ENCODE measurements at regions of chr2 and their contacts with region 1.

Region 1: DNA sequence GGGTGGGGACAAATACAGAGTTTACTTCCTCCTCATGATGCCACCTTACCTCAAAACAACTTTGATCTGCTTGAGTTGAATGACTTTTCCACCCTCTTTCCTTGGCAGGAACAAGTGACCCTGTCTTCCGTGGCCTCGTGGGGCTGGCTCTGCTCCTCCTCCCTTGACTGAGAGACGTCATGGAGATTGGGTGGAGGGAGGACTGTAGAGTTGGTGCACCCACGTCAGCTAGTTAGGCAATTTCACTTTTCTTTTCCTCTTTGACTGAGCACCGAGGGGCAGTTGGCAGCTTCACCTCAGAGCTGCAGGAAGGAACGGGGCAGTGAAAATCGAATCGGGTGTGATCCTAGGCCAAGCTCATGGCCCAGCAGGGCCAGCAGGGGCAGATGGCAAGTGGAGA is at the start of gene SP140:
- DNase-seq: peak; percentile 86 to 97 (median 88)
- H3K4me3 ChIP-seq: peak within 1 kb of the TSS; percentile 39 to 68
- H3K4me3 Mint-ChIP-seq: peak within 1 kb of the TSS; percentile 88 to 97 (median 90)
- H3K27ac ChIP-seq: peak within 1 kb of the TSS; percentile 79
- H3K27ac Mint-ChIP-seq: peak within 1 kb of the TSS; percentile 96 to 99 (median 97)
- H3K4me1 ChIP-seq: peaks cover 60% of the 10 kb centered on the region
- H3K4me1 Mint-ChIP-seq: peaks cover 47 to 77% (median 56%) of the 10 kb centered on the region in 4 donors
- H3K27me3 ChIP-seq: no peaks in the 10 kb centered on the region
- H3K27me3 Mint-ChIP-seq: no peaks in the 10 kb centered on the region
- total RNA-seq, gene SP140: 70.8 to 79.3 TPM

Region 2: DNA sequence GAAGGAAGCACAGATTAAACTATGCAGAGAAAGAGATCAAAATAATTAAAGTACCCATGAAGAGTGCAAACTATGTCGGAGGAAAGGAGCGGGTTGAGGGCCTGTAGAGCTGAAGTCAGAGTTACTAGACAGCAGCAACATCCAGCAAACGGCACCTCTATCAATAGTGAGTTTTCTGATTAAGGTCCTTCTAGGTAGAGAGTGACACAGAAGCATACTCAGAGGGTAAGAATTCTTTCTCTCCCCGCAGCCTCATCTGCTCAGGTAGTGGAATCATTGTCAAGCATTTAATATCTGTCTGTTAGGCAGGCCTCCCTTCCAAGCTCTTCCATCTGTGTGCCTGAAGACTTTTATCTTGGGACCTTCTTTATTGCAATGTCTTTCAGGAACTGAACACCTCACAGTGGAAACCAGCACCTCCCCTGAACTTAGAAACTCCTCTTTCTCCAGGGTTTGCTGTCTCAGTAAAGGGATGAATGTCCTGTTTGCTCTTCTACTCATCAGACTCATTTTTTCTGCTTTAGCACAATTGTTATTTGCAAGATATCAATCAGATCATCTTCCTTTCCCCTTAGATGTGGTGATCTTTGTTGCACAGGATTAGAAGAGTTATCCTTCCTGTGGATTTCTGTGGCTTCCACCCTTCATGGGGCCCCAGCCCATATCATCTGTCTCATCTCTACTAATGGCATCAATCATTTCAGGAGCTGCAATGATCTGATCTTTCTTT is 28.8 kb after region 1 on chr2:
- CTCF ChIA-PET with region 1: interaction called, 4 read pairs
- POLR2A ChIA-PET with region 1: interaction called, 29 read pairs
- intact Hi-C with region 1: loop called (anchors 2 kb)
- DNase-seq: peak; percentile 75 to 82 (median 78)
- H3K4me3 ChIP-seq: peak overlapping the region in 1 of 2 donors; percentile 11
- H3K4me3 Mint-ChIP-seq: no peak overlapping the region
- H3K27ac ChIP-seq: no peak overlapping the region
- H3K27ac Mint-ChIP-seq: no peak overlapping the region
- H3K4me1 ChIP-seq: peaks cover 39% of the 10 kb centered on the region
- H3K4me1 Mint-ChIP-seq: peaks cover 8 to 14% (median 12%) of the 10 kb centered on the region in 4 donors
- H3K27me3 ChIP-seq: no peaks in the 10 kb centered on the region
- H3K27me3 Mint-ChIP-seq: no peaks in the 10 kb centered on the region

Region 3: GRCh38 chr2:230326453-230327417 is 101.2 kb after region 1 on chr2 and contains the start of gene SP140L:
- CTCF ChIA-PET with region 1: no interaction called
- POLR2A ChIA-PET with region 1: interaction called, 24 read pairs
- intact Hi-C with region 1: loop called (anchors 1 kb)
- DNase-seq: peak; percentile 73 to 89 (median 79)
- H3K4me3 ChIP-seq: peak within 1 kb of the TSS; percentile 51 to 82
- H3K4me3 Mint-ChIP-seq: peak within 1 kb of the TSS; percentile 90 to 98 (median 94)
- H3K27ac ChIP-seq: peak within 1 kb of the TSS; percentile 84
- H3K27ac Mint-ChIP-seq: peak within 1 kb of the TSS; percentile 94 to 99 (median 97)
- H3K4me1 ChIP-seq: peaks cover 78% of the 10 kb centered on the region
- H3K4me1 Mint-ChIP-seq: peaks cover 48 to 90% (median 75%) of the 10 kb centered on the region in 4 donors
- H3K27me3 ChIP-seq: no peaks in the 10 kb centered on the region
- H3K27me3 Mint-ChIP-seq: no peaks in the 10 kb centered on the region
- total RNA-seq, gene SP140L: 98.6 to 102 TPM

Region 4: GRCh38 chr2:230602562-230603230 is 377.2 kb after region 1 on chr2:
- CTCF ChIA-PET with region 1: no interaction called
- POLR2A ChIA-PET with region 1: interaction called, 10 read pairs
- intact Hi-C with region 1: loop called (anchors 2 kb)
- DNase-seq: peak; percentile 49 to 71 (median 62)
- H3K4me3 ChIP-seq: peak overlapping the region; percentile 41 to 44
- H3K4me3 Mint-ChIP-seq: peak overlapping the region; percentile 36 to 85 (median 78)
- H3K27ac ChIP-seq: peak overlapping the region; percentile 59
- H3K27ac Mint-ChIP-seq: peak overlapping the region; percentile 81 to 99 (median 97)
- H3K4me1 ChIP-seq: peaks cover 63% of the 10 kb centered on the region
- H3K4me1 Mint-ChIP-seq: peaks cover 48 to 81% (median 63%) of the 10 kb centered on the region in 4 donors
- H3K27me3 ChIP-seq: no peaks in the 10 kb centered on the region
- H3K27me3 Mint-ChIP-seq: no peaks in the 10 kb centered on the region

Region 5: GRCh38 chr2:231056453-231057424 is 831.3 kb after region 1 on chr2 and contains the start of gene PSMD1:
- CTCF ChIA-PET with region 1: no interaction called
- POLR2A ChIA-PET with region 1: no interaction called
- intact Hi-C with region 1: loop called (anchors 5 kb)
- DNase-seq: peak; percentile 95 to 98 (median 96)
- H3K4me3 ChIP-seq: peak within 1 kb of the TSS; percentile 70 to 87
- H3K4me3 Mint-ChIP-seq: peak within 1 kb of the TSS; percentile 98 to 100 (median 99)
- H3K27ac ChIP-seq: peak within 1 kb of the TSS; percentile 85
- H3K27ac Mint-ChIP-seq: peak within 1 kb of the TSS; percentile 99 to 100 (median 100)
- H3K4me1 ChIP-seq: peaks cover 35% of the 10 kb centered on the region
- H3K4me1 Mint-ChIP-seq: peaks cover 31 to 66% (median 49%) of the 10 kb centered on the region in 4 donors
- H3K27me3 ChIP-seq: no peaks in the 10 kb centered on the region
- H3K27me3 Mint-ChIP-seq: peaks cover 0 to 5% of the 10 kb centered on the region in 2 donors
- total RNA-seq, gene PSMD1: 38.0 to 40.8 TPM